Heart left ventricle (tissue), 16 donors: ENCODE measurements at regions of chr5 and their contacts with region 1.

Region 1: DNA sequence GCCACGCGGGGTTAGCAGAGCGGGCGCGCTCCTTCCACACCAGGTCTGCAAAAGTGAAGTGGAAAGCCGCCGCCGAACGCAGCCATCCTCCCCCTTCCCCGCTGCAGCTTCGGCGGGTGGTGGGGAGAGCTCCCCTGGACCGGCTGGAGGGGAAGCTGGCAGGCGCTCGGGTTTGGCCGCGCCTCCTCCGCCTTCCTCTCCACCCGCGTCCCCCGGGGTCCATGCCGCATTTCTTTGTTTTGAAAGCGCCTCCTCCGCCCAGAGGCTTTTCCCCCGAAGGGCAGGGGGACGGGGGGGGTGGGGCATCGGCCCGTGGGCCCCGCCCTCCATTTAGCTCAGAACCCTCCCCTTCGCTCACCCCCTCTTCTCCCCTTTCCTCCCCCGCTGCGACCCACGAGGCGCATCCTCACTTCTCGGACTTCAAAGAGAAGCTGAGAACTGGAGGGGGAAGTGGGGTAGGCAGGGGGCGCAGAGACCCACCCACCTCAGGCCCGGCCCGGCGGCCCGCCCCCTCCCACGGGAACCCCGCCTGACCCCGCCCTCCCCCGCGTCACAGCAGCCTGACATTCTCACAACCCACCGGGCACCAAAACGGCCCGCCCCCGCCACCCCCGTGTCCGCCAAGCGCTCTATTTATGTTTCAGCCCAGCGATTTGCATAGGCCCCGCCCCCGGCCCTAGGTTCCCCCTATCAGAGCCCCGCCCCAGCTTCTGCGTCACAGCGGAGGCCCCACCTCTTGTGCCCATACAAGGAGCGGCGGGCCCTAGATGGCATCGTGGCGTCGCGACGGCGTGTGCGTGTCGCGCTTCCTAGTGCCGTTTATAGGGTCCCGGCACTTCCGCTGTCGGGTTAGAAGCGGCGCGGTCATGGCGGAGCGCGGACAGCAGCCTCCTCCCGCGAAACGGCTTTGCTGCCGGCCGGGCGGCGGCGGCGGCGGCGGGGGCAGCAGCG is at the start of gene ZSWIM6:
- DNase-seq: peak; percentile 99 to 100 (median 100)
- ATAC-seq: peak; percentile 94 to 98 (median 96)
- H3K4me3 ChIP-seq: peak within 1 kb of the TSS; percentile 69 to 96 (median 92)
- H3K27ac ChIP-seq: peak within 1 kb of the TSS; percentile 87 to 98 (median 94)
- H3K4me1 ChIP-seq: peaks cover 2 to 55% (median 25%) of the 10 kb centered on the region in 12 donors
- H3K27me3 ChIP-seq: no peaks in the 10 kb centered on the region
- CTCF ChIP-seq: peak in 1 of 12 donors; percentile 18
- POLR2A ChIP-seq: peak; percentile 95 to 97
- total RNA-seq, gene ZSWIM6: 4.5 to 14.9 (median 6.9) TPM

Region 2: DNA sequence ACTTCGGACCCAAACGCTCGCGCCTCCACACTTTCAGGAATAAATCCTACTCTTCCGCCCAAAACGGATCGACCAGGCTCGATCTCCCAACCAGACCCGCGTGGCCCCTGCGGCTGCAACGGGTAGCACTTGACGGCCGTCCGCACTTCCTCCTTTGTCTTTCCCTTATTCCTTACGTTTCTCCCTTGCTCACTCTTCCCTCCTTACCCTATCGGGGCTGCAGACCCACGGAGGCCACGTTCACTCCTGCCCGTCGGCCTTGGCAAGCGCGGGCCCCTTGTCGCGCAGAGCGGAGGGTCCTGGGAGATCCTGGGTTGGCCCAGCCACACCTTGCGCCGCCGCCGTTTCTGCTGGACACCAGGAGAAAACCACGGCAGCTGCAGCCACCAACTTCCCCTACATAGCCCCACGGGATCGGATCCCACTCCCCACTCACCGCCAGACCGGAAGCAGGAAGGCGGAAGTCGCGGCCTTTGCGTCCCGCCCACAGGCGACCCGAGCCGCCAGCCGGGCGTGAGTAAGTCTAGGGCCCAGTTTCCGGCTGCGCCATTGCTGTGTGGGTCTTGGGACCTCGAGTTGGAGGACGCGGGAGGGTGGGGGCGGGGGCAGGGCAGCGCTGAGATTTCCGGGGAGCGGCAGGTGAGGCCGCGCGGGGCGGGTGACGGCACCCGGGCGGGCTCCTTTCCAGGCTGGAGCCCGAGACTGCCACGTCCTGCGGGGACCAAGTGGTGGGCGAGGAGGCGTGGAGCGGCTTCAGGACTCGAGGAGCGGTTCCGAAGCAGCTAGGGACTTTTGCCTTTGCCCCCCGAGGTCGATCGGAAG is 169.5 kb before region 1 on chr5 and contains the start of gene SMIM15:
- intact Hi-C with region 1: loop called in 8 of 10 experiments (anchors 2 to 10 kb)
- DNase-seq: peak; percentile 88 to 95 (median 93)
- ATAC-seq: peak; percentile 96 to 99 (median 99)
- H3K4me3 ChIP-seq: peak within 1 kb of the TSS; percentile 79 to 96 (median 86)
- H3K27ac ChIP-seq: peak within 1 kb of the TSS; percentile 89 to 97 (median 94)
- H3K4me1 ChIP-seq: peaks cover 0 to 50% (median 9%) of the 10 kb centered on the region in 12 donors
- H3K27me3 ChIP-seq: no peaks in the 10 kb centered on the region
- CTCF ChIP-seq: no peak
- POLR2A ChIP-seq: peak in 1 of 2 donors; percentile 59
- total RNA-seq, gene SMIM15: 8.0 to 39.3 (median 22.2) TPM

Region 3: DNA sequence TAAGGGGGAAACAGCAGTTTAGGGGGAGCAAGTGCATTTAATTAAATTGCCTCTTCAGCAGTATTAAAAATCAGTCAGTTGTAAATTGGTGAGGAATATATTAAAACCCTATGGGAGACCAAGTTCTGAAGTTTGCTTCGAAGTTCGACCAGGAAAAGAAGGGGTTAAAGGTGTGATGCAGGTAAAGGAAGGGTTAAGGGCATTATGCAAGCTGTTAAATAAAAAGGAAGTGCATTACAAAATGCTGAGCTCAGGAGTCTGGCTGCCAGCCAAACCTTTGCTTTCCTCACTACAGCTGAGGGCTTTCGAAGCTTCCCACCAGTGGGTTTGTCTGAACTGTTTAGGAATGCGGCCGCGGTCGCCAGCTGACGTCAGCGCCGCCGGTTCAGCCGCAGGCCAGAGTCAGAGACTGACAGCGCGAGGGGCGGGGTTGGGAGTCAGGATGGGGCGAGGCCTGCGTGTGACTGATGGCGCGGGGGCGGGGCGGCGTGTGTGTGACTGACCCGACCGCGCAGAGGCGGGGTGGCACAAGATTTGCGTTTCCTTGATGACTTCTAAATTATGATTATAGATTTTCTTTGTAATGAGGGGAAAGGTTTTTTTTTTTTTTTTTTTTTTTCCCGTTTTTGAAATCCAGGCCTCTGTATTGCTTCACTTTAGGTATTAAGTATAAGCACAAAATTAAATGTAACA is 76.9 kb after region 1 on chr5:
- intact Hi-C with region 1: loop called (anchors 1 to 5 kb)
- DNase-seq: peak; percentile 99 to 100 (median 100)
- ATAC-seq: peak; percentile 100
- H3K4me3 ChIP-seq: peak overlapping the region in 9 of 12 donors; percentile 6 to 50 (median 33)
- H3K27ac ChIP-seq: peak overlapping the region in 9 of 12 donors; percentile 4 to 74 (median 36)
- H3K4me1 ChIP-seq: peaks cover 3 to 38% (median 19%) of the 10 kb centered on the region in 12 donors
- H3K27me3 ChIP-seq: no peaks in the 10 kb centered on the region
- CTCF ChIP-seq: peak in 1 of 12 donors; percentile 9
- POLR2A ChIP-seq: peak in 1 of 2 donors; percentile 14

Region 4: DNA sequence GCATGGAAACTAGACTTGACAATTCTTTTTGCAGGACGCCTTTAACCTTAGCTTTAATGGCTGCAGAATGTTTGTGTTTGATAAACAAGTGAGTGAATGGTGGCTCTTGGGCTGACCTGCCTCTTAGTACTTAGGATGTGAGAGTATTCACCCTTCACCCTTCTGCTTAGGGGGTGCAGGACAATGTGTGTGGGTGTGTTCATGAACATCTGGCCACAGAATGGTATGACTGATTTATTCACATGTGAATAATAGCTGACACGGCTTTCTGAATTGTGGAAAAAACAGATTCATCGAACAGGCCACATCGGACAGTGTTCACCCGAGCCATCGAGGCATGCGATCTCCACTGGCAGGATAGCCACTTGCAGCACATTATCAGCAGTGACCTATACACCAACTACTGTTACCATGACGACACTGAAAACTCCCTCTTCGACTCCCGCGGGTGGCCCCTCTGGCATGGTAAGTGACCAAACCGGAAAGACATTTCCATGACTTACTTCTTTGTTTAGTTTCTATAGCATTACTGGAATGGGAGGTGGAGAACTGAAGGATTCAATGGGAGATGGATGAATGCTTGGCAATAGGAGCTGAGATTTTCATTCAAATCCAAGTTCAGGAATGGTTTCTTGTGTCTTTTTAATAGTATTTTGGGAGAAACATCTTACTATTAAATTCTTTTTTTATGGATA is 194.0 kb after region 1 on chr5:
- intact Hi-C with region 1: no loop called
- DNase-seq: no peak
- ATAC-seq: no peak
- H3K4me3 ChIP-seq: no peak overlapping the region
- H3K27ac ChIP-seq: no peak overlapping the region
- H3K4me1 ChIP-seq: peaks cover 0 to 7% (median 0%) of the 10 kb centered on the region in 12 donors
- H3K27me3 ChIP-seq: no peaks in the 10 kb centered on the region
- CTCF ChIP-seq: no peak
- POLR2A ChIP-seq: no peak

Region 5: GRCh38 chr5:61625681-61626621 is 294.3 kb after region 1 on chr5:
- intact Hi-C with region 1: loop called in 4 of 10 experiments (anchors 2 to 10 kb)
- DNase-seq: peak; percentile 79 to 91 (median 87)
- ATAC-seq: peak; percentile 94 to 98 (median 98)
- H3K4me3 ChIP-seq: peak overlapping the region; percentile 35 to 74 (median 64)
- H3K27ac ChIP-seq: peak overlapping the region; percentile 61 to 96 (median 90)
- H3K4me1 ChIP-seq: peaks cover 0 to 30% (median 15%) of the 10 kb centered on the region in 12 donors
- H3K27me3 ChIP-seq: no peaks in the 10 kb centered on the region
- CTCF ChIP-seq: peak in 2 of 12 donors; percentile 13 to 15
- POLR2A ChIP-seq: peak in 1 of 2 donors; percentile 43

Region 6: DNA sequence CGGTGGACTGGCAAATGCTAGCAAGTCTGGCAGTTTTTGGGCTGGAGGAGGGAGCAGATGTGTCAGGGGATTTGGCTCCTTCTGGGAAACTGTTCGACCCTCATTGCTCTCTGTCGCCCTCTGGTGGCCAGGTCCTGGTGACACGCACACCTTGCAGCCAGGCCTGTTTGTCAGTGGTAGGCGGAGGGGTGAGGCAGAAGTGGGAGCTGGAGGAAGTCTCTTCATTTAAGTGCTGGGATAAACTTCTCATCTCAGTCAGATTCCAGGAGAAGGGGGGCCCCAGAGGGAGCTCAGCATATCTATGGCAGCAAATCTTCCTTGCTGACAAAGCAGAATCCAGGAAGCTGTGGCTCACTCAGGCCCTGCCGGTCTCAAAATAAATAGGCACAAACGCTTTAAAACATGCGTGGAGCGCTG is 326.9 kb after region 1 on chr5:
- intact Hi-C with region 1: loop called in 9 of 10 experiments (anchors 2 to 10 kb)
- DNase-seq: peak; percentile 79 to 93 (median 85)
- ATAC-seq: peak; percentile 80 to 92 (median 92)
- H3K4me3 ChIP-seq: peak overlapping the region in 8 of 12 donors; percentile 5 to 42 (median 27)
- H3K27ac ChIP-seq: peak overlapping the region in 4 of 12 donors; percentile 42 to 64 (median 62)
- H3K4me1 ChIP-seq: peaks cover 0 to 12% (median 1%) of the 10 kb centered on the region in 12 donors
- H3K27me3 ChIP-seq: no peaks in the 10 kb centered on the region
- CTCF ChIP-seq: peak; percentile 86 to 97 (median 92)
- POLR2A ChIP-seq: no peak